B cell (primary cell): ENCODE measurements at regions of chr6 and their contacts with region 1.

Region 1: GRCh38 chr6:90285611-90286381 is 10.8 kb downstream of the BACH2 start:
- DNase-seq: peak; percentile 87
- ATAC-seq: peak; percentile 70
- H3K4me3 ChIP-seq: peak overlapping the region; percentile 8 to 58 (median 32)
- H3K4me3 Mint-ChIP-seq: peak overlapping the region; percentile 73
- H3K27ac ChIP-seq: peak overlapping the region; percentile 80 to 90
- H3K27ac Mint-ChIP-seq: peak overlapping the region; percentile 85
- H3K4me1 ChIP-seq: peaks cover 78 to 90% of the 10 kb centered on the region in 2 donors
- H3K4me1 Mint-ChIP-seq: peaks cover 88% of the 10 kb centered on the region
- H3K27me3 ChIP-seq: no peaks in the 10 kb centered on the region
- H3K27me3 Mint-ChIP-seq: no peaks in the 10 kb centered on the region
- CTCF ChIP-seq: no peak

Region 2: DNA sequence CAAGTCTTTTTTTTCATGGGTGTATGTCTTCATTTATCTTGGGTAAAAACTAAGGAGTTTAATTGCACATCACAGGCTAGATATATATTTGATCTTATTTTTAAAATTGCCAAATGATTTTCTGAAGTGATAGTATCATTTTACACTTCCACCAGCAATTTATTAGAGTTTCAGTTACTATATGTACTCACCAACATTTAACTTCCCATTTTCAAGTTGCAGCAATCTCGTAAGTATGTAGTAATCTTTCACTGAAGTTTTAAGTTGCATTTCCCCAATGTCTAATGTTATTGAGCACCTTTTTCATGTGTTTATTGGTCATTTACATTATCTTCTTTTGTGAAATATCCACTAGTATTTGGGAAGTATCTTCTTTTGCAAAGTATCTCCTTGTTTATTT is 1842.2 kb before region 1 on chr6:
- CTCF ChIA-PET with region 1: no interaction called
- POLR2A ChIA-PET with region 1: no interaction called
- intact Hi-C with region 1: no loop called
- DNase-seq: no peak
- ATAC-seq: no peak
- H3K4me3 ChIP-seq: no peak overlapping the region
- H3K4me3 Mint-ChIP-seq: no peak overlapping the region
- H3K27ac ChIP-seq: no peak overlapping the region
- H3K27ac Mint-ChIP-seq: no peak overlapping the region
- H3K4me1 ChIP-seq: no peaks in the 10 kb centered on the region
- H3K4me1 Mint-ChIP-seq: no peaks in the 10 kb centered on the region
- H3K27me3 ChIP-seq: no peaks in the 10 kb centered on the region
- H3K27me3 Mint-ChIP-seq: peaks cover 4% of the 10 kb centered on the region
- CTCF ChIP-seq: no peak

Region 3: DNA sequence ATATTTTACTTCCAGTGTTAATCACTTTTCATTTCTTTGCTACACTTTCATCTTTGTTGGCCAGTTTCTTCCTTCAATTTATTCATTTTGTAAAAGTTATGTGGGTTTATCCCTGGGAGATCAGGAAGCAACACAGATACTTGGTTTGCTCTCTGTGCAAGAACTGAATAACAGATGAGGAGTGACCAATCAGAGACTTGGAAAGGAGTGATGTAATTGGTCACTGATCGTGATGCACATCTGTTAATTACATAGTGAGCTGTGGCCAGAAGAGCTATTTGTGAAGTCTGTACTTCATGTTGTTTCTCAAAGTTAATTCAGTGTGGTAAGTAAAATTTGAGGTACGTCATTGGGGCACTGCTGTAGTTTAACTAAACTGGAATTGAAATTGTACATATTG is 831.5 kb before region 1 on chr6:
- CTCF ChIA-PET with region 1: no interaction called
- POLR2A ChIA-PET with region 1: no interaction called
- intact Hi-C with region 1: no loop called
- DNase-seq: no peak
- ATAC-seq: no peak
- H3K4me3 ChIP-seq: no peak overlapping the region
- H3K4me3 Mint-ChIP-seq: no peak overlapping the region
- H3K27ac ChIP-seq: no peak overlapping the region
- H3K27ac Mint-ChIP-seq: no peak overlapping the region
- H3K4me1 ChIP-seq: no peaks in the 10 kb centered on the region
- H3K4me1 Mint-ChIP-seq: no peaks in the 10 kb centered on the region
- H3K27me3 ChIP-seq: no peaks in the 10 kb centered on the region
- H3K27me3 Mint-ChIP-seq: no peaks in the 10 kb centered on the region
- CTCF ChIP-seq: no peak

Region 4: DNA sequence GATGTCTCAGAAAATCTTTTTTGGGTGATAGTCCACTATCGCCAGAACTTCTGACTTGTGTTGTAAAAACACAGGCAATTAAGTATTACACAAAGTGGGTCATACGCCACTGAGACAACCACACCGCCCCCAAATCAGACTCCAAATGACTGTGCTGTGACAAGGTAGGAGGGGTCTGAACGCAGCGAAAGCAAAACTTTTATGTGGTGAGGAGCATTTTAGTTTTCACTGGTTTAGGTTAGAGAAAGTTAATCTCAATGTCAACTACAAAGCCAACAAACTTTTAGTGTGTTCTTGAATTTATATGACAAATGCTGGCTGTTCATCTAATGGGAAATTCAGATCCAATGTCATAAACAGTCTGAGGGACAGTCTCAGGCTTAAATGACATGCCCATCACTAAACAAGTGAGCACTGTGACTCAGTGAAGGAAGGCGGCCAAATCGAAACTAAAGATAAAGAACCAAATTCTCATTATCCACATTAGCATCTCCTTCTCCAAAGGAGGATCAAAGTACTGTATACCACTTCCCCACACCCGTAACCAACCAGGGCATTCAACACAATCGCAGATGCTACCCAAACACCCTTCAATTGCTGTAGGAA is 204.8 kb before region 1 on chr6:
- CTCF ChIA-PET with region 1: no interaction called
- POLR2A ChIA-PET with region 1: no interaction called
- intact Hi-C with region 1: loop called (anchors 5 kb)
- DNase-seq: peak; percentile 54
- ATAC-seq: peak; percentile 48
- H3K4me3 ChIP-seq: peak overlapping the region in 4 of 5 experiments; percentile 11 to 48 (median 40)
- H3K4me3 Mint-ChIP-seq: peak overlapping the region; percentile 90
- H3K27ac ChIP-seq: peak overlapping the region; percentile 4 to 52
- H3K27ac Mint-ChIP-seq: peak overlapping the region; percentile 90
- H3K4me1 ChIP-seq: peaks cover 61 to 72% of the 10 kb centered on the region in 2 donors
- H3K4me1 Mint-ChIP-seq: peaks cover 92% of the 10 kb centered on the region
- H3K27me3 ChIP-seq: no peaks in the 10 kb centered on the region
- H3K27me3 Mint-ChIP-seq: no peaks in the 10 kb centered on the region
- CTCF ChIP-seq: no peak

Region 5: DNA sequence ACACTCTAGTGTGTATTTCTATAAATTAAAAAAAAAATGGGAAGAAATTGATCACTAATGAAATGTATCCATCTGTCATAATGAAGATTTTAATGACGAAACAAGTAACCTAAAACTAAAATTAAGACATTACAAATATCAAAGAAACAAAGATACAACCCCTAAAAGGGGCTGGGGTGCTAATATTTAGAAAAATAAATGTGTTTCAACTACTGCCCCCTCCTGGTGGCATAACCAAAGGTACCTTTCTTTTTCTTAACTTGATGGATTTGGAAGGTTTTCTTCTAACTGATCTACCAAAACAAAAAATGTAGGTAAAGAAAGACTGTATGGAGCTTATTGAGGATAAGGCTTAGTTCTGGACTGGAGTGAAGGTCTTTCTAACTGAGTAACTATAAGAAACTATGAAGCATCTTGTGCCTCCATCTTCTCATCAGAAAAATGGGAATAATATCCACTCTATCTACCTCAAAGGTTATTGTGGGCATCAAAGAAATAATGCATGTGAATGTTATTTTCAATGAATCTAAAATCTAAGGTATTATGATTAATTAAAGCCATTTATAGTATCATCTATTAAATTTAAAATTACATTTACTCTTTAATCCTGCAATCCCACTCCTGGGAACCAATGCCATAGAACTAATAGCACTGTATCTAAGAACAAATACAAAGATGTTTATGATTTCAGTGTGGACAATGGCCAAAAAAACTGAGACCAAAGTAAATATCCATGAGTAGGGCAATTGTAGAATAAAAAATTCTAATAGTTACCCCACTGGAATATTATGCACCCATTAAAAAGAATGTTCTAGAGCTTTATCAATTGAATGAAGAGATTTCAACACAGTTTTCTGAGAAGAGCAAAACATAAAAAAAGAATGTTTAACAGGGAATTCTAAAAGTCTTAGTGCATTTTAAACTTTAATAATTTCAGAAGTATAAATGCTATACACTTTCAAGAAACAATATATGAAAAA is 106.3 kb before region 1 on chr6:
- CTCF ChIA-PET with region 1: no interaction called
- POLR2A ChIA-PET with region 1: no interaction called
- intact Hi-C with region 1: loop called (anchors 2 kb)
- DNase-seq: peak; percentile 49
- ATAC-seq: no peak
- H3K4me3 ChIP-seq: peak overlapping the region in 1 of 5 experiments; percentile 37
- H3K4me3 Mint-ChIP-seq: peak overlapping the region; percentile 79
- H3K27ac ChIP-seq: peak overlapping the region; percentile 61 to 91
- H3K27ac Mint-ChIP-seq: peak overlapping the region; percentile 81
- H3K4me1 ChIP-seq: peaks cover 56 to 64% of the 10 kb centered on the region in 2 donors
- H3K4me1 Mint-ChIP-seq: peaks cover 81% of the 10 kb centered on the region
- H3K27me3 ChIP-seq: no peaks in the 10 kb centered on the region
- H3K27me3 Mint-ChIP-seq: no peaks in the 10 kb centered on the region
- CTCF ChIP-seq: peak; percentile 73

Region 6: GRCh38 chr6:90251295-90251992 is 34.4 kb before region 1 on chr6:
- CTCF ChIA-PET with region 1: interaction called, 3 read pairs
- POLR2A ChIA-PET with region 1: interaction called, 5 read pairs
- intact Hi-C with region 1: loop called (anchors 5 kb)
- DNase-seq: peak; percentile 66
- ATAC-seq: peak; percentile 47
- H3K4me3 ChIP-seq: no peak overlapping the region
- H3K4me3 Mint-ChIP-seq: peak overlapping the region; percentile 3
- H3K27ac ChIP-seq: peak overlapping the region; percentile 25 to 80
- H3K27ac Mint-ChIP-seq: peak overlapping the region; percentile 22
- H3K4me1 ChIP-seq: peaks cover 33 to 47% of the 10 kb centered on the region in 2 donors
- H3K4me1 Mint-ChIP-seq: peaks cover 63% of the 10 kb centered on the region
- H3K27me3 ChIP-seq: no peaks in the 10 kb centered on the region
- H3K27me3 Mint-ChIP-seq: no peaks in the 10 kb centered on the region
- CTCF ChIP-seq: no peak

Region 7: GRCh38 chr6:90296346-90297114 is 10.7 kb after region 1 on chr6 and contains the start of gene BACH2:
- CTCF ChIA-PET with region 1: interaction called, 34 read pairs
- POLR2A ChIA-PET with region 1: interaction called, 8 read pairs
- intact Hi-C with region 1: loop called (anchors 1 kb)
- DNase-seq: peak; percentile 97
- ATAC-seq: peak; percentile 76
- H3K4me3 ChIP-seq: peak within 1 kb of the TSS; percentile 61 to 95 (median 79)
- H3K4me3 Mint-ChIP-seq: peak within 1 kb of the TSS; percentile 89
- H3K27ac ChIP-seq: peak within 1 kb of the TSS; percentile 94
- H3K27ac Mint-ChIP-seq: peak within 1 kb of the TSS; percentile 96
- H3K4me1 ChIP-seq: peaks cover 47 to 51% of the 10 kb centered on the region in 2 donors
- H3K4me1 Mint-ChIP-seq: peaks cover 50% of the 10 kb centered on the region
- H3K27me3 ChIP-seq: no peaks in the 10 kb centered on the region
- H3K27me3 Mint-ChIP-seq: no peaks in the 10 kb centered on the region
- CTCF ChIP-seq: no peak
- total RNA-seq, gene BACH2: 235 and 254 TPM in 2 replicates

Region 8: DNA sequence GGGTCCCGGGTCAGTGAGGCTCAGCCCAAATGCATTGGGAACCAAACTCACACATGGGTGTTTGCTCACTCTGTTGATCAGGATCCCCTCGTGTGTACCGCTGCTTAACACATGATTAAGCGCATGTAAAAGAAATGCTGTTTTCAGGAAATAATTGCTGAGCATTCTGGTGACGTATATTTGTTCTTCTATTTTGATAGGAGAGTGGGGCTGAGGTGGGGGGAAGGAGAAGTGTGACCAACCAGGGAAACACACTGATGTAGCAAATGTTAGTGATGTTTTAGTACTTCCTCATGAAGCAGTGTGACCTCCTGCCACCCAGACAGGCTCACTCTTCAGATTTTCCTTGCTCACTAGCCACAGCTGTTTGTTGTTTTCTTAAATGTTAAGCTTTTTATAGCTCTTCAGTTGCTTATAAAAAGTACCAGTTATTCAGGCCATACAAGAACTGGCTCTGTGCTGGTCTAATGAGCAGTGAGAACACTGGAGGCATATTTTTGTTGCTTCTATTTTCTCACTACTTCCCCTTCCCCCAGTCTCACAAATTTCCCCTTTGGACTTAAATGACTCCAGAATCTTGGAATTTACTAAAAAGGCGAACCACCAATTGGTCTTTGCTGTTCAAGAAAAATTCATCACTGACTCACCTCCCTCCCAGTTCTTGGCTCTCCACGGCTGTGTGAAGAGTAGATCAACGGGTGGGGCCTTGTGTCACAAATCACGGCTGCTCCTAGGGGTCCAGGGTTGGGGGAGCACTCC is 90.1 kb after region 1 on chr6:
- CTCF ChIA-PET with region 1: interaction called, 7 read pairs
- POLR2A ChIA-PET with region 1: no interaction called
- intact Hi-C with region 1: loop called (anchors 1 kb)
- DNase-seq: peak; percentile 95
- ATAC-seq: peak; percentile 95
- H3K4me3 ChIP-seq: peak overlapping the region in 4 of 5 experiments; percentile 16 to 48 (median 29)
- H3K4me3 Mint-ChIP-seq: peak overlapping the region; percentile 79
- H3K27ac ChIP-seq: peak overlapping the region; percentile 94 to 98
- H3K27ac Mint-ChIP-seq: peak overlapping the region; percentile 96
- H3K4me1 ChIP-seq: peaks cover 39 to 45% of the 10 kb centered on the region in 2 donors
- H3K4me1 Mint-ChIP-seq: peaks cover 64% of the 10 kb centered on the region
- H3K27me3 ChIP-seq: no peaks in the 10 kb centered on the region
- H3K27me3 Mint-ChIP-seq: no peaks in the 10 kb centered on the region
- CTCF ChIP-seq: no peak

Region 9: GRCh38 chr6:90502866-90503407 is 217.1 kb after region 1 on chr6:
- CTCF ChIA-PET with region 1: no interaction called
- POLR2A ChIA-PET with region 1: no interaction called
- intact Hi-C with region 1: no loop called
- DNase-seq: no peak
- ATAC-seq: no peak
- H3K4me3 ChIP-seq: no peak overlapping the region
- H3K4me3 Mint-ChIP-seq: no peak overlapping the region
- H3K27ac ChIP-seq: no peak overlapping the region
- H3K27ac Mint-ChIP-seq: no peak overlapping the region
- H3K4me1 ChIP-seq: no peaks in the 10 kb centered on the region
- H3K4me1 Mint-ChIP-seq: no peaks in the 10 kb centered on the region
- H3K27me3 ChIP-seq: no peaks in the 10 kb centered on the region
- H3K27me3 Mint-ChIP-seq: no peaks in the 10 kb centered on the region
- CTCF ChIP-seq: no peak